ENCODE measurements at regions of chr18 and their contacts with region 1.

Region 1: GRCh38 chr18:27198036-27198435 is 12.9 kb upstream of the CHST9 start:
- DNase-seq: peak; percentile 45 to 60
- H3K4me3 ChIP-seq: no peak overlapping the region
- H3K4me3 Mint-ChIP-seq: no peak overlapping the region
- H3K27ac Mint-ChIP-seq: no peak overlapping the region
- H3K4me1 ChIP-seq: peaks cover 19% of the 10 kb centered on the region
- H3K4me1 Mint-ChIP-seq: peaks cover 18% of the 10 kb centered on the region
- H3K27me3 ChIP-seq: no peaks in the 10 kb centered on the region
- H3K27me3 Mint-ChIP-seq: no peaks in the 10 kb centered on the region
- CTCF ChIP-seq: no peak

Region 2: GRCh38 chr18:27062802-27063201 is 135.2 kb before region 1 on chr18:
- CTCF ChIA-PET with region 1: no interaction called
- POLR2A ChIA-PET with region 1: no interaction called
- intact Hi-C with region 1: loop called (anchors 1 kb)
- DNase-seq: no peak
- H3K4me3 ChIP-seq: no peak overlapping the region
- H3K4me3 Mint-ChIP-seq: no peak overlapping the region
- H3K27ac Mint-ChIP-seq: no peak overlapping the region
- H3K4me1 ChIP-seq: peaks cover 31% of the 10 kb centered on the region
- H3K4me1 Mint-ChIP-seq: peaks cover 7% of the 10 kb centered on the region
- H3K27me3 ChIP-seq: no peaks in the 10 kb centered on the region
- H3K27me3 Mint-ChIP-seq: no peaks in the 10 kb centered on the region
- CTCF ChIP-seq: no peak

Region 3: GRCh38 chr18:27143580-27144287 is 54.3 kb before region 1 on chr18:
- CTCF ChIA-PET with region 1: no interaction called
- POLR2A ChIA-PET with region 1: no interaction called
- intact Hi-C with region 1: loop called (anchors 1 kb)
- DNase-seq: peak in 1 of 2 experiments; percentile 30
- H3K4me3 ChIP-seq: no peak overlapping the region
- H3K4me3 Mint-ChIP-seq: peak overlapping the region; percentile 27
- H3K27ac Mint-ChIP-seq: no peak overlapping the region
- H3K4me1 ChIP-seq: peaks cover 7% of the 10 kb centered on the region; the same call in 1 of the 2 replicates
- H3K4me1 Mint-ChIP-seq: peaks cover 6% of the 10 kb centered on the region
- H3K27me3 ChIP-seq: no peaks in the 10 kb centered on the region
- H3K27me3 Mint-ChIP-seq: no peaks in the 10 kb centered on the region
- CTCF ChIP-seq: no peak

Region 4: GRCh38 chr18:27175914-27176313 is 22.1 kb before region 1 on chr18:
- CTCF ChIA-PET with region 1: no interaction called
- POLR2A ChIA-PET with region 1: no interaction called
- intact Hi-C with region 1: loop called (anchors 1 kb)
- DNase-seq: no peak
- H3K4me3 ChIP-seq: no peak overlapping the region
- H3K4me3 Mint-ChIP-seq: no peak overlapping the region
- H3K27ac Mint-ChIP-seq: no peak overlapping the region
- H3K4me1 ChIP-seq: peaks cover 19% of the 10 kb centered on the region; the same call in 1 of the 2 replicates
- H3K4me1 Mint-ChIP-seq: peaks cover 14% of the 10 kb centered on the region
- H3K27me3 ChIP-seq: no peaks in the 10 kb centered on the region
- H3K27me3 Mint-ChIP-seq: no peaks in the 10 kb centered on the region
- CTCF ChIP-seq: no peak

Region 5: DNA sequence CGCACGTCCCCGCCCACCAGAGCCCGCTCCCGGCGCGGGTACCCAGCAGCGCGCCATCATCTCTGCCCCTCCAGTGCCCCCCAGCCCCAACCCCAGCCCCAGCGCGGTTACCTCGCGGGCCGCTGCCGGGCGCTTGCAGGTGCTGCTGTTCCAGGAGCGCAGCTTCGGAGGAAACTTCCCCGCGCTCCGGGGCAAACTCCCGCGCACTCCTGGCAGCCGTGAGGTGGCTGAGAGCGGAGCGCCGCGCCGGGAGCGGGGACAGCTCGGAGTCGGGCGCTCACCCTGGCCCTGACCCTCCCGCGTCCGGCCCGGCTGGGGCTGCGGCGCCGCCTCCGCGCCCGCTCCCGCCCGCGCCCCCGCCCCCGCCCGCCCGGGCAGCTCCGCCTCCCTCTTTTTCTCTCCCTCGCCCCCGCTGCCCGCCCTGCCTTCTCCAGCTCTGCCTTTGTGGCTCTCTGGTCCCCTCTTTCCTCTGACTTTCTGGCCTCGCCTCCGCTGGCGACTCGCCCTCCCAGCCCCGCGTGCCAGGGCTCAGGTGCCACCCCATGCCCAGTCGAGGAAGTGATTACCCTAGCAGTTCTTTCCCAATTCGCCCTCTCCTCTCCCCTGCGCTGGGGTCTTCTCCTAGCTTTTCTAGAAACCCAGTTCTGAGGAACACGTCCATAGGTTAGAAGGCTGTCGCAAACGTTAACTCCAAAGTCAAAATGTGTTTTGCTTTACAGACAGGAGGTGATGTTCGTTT is 12.8 kb before region 1 on chr18 and contains the start of gene CHST9:
- CTCF ChIA-PET with region 1: no interaction called
- POLR2A ChIA-PET with region 1: no interaction called
- intact Hi-C with region 1: loop called (anchors 1 kb)
- DNase-seq: peak; percentile 19 to 38
- H3K4me3 ChIP-seq: peak within 1 kb of the TSS; percentile 53
- H3K4me3 Mint-ChIP-seq: peak within 1 kb of the TSS; percentile 88
- H3K27ac Mint-ChIP-seq: no peak within 1 kb of the TSS
- H3K4me1 ChIP-seq: no peaks in the 10 kb centered on the region
- H3K4me1 Mint-ChIP-seq: no peaks in the 10 kb centered on the region
- H3K27me3 ChIP-seq: no peaks in the 10 kb centered on the region
- H3K27me3 Mint-ChIP-seq: no peaks in the 10 kb centered on the region
- CTCF ChIP-seq: no peak
- total RNA-seq, gene CHST9: 20.6 and 26.5 TPM in 2 replicates

Measured in Caco-2 (cell line).